ENCODE measurements at regions of chr1 and their contacts with region 1.

Region 1: DNA sequence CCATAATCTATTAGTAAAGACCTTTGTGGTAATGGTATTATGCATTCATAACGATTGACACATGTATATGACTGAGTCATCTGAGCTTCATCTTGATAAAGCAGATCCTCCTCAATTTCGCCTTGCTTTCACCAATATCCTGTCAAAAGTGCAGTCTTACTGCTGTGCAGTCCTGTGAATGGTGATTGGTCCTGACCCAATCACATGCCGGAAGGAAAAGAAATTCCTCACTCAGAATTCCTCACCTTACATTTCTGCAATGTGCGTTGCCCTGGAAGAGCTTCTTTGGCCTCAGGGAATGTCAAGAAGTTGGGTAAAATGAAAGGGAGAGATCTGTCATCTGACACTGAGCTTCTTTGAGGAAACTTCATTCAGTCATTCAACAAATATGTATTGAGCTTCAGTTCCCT is 121.0 kb upstream of the TSPAN2 start:
- DNase-seq: no peak
- ATAC-seq: no peak
- H3K4me3 ChIP-seq: no peak overlapping the region
- H3K27ac ChIP-seq: no peak overlapping the region
- H3K4me1 ChIP-seq: peaks cover 0 to 6% of the 10 kb centered on the region in 2 experiments; a peak in 1 of 4 replicates
- H3K27me3 ChIP-seq: no peaks in the 10 kb centered on the region
- CTCF ChIP-seq: no peak
- POLR2A ChIP-seq: no peak
- RAD21 ChIP-seq: no peak

Region 2: DNA sequence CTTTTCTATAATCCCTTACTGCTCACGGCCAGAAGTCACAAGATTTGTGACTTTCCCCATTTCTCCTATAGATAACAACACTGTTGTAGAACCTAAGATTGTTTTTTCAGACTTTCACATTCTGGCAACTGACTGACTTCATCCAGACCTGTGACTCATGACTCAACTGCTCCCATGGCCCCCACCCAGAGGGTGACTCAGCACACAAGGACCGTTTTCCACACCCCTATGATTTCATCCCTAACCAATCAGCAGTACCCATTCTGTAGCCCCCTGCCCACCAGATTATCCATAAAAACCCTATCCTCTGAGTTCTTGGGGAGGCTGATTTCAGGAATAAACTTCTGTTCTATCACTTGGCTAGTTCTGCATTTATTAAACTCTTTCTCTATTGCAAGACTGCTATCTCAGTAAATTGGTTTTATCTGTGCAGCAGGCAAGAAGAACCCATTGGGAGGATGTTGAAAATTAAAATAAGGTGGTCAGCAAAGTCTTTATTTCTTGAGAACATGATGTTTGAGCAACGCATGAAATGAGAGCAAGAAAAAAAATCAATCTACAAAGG is 48.1 kb after region 1 on chr1:
- CTCF ChIA-PET with region 1: no interaction called
- POLR2A ChIA-PET with region 1: no interaction called
- RAD21 ChIA-PET with region 1: no interaction called
- intact Hi-C with region 1: loop called (anchors 5 kb)
- DNase-seq: peak; percentile 2
- ATAC-seq: no peak
- H3K4me3 ChIP-seq: no peak overlapping the region
- H3K27ac ChIP-seq: no peak overlapping the region
- H3K4me1 ChIP-seq: peaks cover 0 to 5% of the 10 kb centered on the region in 2 experiments; a peak in 2 of 4 replicates
- H3K27me3 ChIP-seq: no peaks in the 10 kb centered on the region
- CTCF ChIP-seq: no peak
- POLR2A ChIP-seq: no peak
- RAD21 ChIP-seq: no peak